ENCODE measurements at regions of chr14 and their contacts with region 1.

Region 1: DNA sequence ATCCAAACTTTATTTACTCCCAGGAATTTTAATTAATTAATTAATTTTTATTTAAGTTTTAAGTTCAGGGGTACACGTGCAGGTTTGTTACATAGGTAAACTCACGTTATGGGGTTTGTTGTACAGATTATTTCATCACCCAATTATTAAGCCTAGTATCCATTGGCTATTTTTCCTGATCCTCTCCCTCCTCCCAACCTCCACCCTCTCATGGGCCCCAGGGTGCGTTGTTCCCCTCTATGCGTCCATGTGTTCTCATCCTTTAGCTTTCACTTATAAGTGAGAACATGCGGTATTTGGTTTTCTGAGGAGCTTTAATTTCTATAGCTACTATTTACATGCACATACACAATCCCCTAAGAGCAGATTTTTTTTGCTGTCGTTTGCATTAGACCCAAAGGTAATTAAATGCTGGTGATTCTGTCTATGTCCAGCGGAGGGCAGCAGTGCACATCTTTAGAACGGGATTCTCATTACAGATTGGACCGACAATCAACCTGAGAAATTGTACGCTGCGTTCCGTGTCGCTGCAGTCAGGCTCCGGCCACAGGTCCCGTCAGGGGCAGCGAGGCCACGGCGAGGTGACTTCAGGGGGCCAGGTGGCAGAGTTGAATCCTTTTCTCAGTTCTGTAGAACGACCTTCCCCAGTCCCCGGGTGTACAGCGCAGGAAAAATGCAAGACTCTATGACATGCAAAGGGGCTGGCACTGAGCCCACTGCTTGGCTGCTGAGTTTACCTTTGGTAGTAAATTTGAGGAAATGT is 11.6 kb downstream of the TMEM30B start:
- DNase-seq: peak; percentile 94
- ATAC-seq: peak; percentile 99
- H3K4me3 Mint-ChIP-seq: peak overlapping the region; percentile 68
- H3K27ac Mint-ChIP-seq: no peak overlapping the region
- H3K4me1 Mint-ChIP-seq: no peaks in the 10 kb centered on the region
- H3K27me3 Mint-ChIP-seq: peaks cover 28% of the 10 kb centered on the region
- CTCF ChIP-seq: peak; percentile 81

Region 2: DNA sequence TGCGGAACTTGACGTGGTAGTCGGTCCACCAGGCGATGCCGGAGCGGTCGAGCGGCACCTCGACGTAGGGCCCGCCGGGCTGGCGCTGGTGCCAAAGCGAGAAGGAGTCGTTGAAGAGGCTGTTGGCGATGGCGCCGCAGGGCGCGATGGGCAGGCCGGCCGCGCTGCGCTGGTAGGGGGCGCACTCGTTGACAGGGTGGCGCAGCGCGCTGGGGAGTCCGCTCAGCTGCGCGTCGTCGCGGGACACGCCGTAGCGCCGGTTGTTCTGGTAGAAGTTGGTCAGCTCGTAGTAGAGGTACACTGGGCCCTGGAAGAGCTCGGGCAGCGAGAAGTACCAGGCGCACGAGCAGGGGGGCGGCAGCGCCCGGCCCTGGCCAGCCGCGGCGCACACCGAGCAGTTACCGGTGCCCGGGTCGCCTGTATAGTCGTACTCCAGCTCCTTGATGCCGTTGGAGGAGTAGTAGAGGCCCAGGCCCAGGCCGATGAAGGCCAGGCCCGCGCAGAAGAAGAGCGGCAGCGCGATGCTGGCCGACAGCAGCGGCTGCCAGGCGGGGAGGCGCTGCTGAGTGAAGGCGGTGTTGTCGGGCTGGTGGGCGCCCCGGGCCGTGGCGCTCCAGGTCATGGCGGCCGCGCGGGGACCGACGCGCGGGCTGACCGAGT is 11.2 kb after region 1 on chr14:
- CTCF ChIA-PET with region 1: interaction called, 61 read pairs
- POLR2A ChIA-PET with region 1: interaction called, 5 read pairs
- intact Hi-C with region 1: no loop called
- DNase-seq: peak; percentile 81
- ATAC-seq: peak; percentile 88
- H3K4me3 Mint-ChIP-seq: peak overlapping the region; percentile 85
- H3K27ac Mint-ChIP-seq: peak overlapping the region; percentile 88
- H3K4me1 Mint-ChIP-seq: peaks cover 30% of the 10 kb centered on the region
- H3K27me3 Mint-ChIP-seq: peaks cover 2% of the 10 kb centered on the region
- CTCF ChIP-seq: peak; percentile 76

Region 3: GRCh38 chr14:61287196-61287595 is 17.7 kb after region 1 on chr14:
- CTCF ChIA-PET with region 1: interaction called, 61 read pairs
- POLR2A ChIA-PET with region 1: no interaction called
- intact Hi-C with region 1: no loop called
- DNase-seq: no peak
- ATAC-seq: no peak
- H3K4me3 Mint-ChIP-seq: no peak overlapping the region
- H3K27ac Mint-ChIP-seq: no peak overlapping the region
- H3K4me1 Mint-ChIP-seq: peaks cover 20% of the 10 kb centered on the region
- H3K27me3 Mint-ChIP-seq: no peaks in the 10 kb centered on the region
- CTCF ChIP-seq: no peak

Region 4: DNA sequence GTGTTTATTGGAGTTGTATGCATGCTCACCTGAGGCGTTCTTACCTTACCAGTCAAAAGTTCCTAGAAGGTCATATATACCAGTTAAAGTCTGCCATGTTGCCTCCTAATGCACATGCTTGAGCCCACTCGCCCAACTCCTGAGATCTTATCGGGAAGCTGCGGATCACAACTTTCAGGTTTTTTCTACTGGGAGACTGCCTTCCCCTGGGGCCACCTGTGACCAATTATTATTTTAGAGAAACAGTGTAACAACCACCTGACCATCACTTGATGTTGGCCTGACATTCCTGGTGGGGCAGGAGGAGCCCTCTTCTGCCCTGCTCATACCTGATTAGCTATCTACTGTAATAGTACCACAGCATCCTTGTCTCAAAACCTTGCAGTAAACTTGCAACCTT is 29.8 kb after region 1 on chr14:
- CTCF ChIA-PET with region 1: no interaction called
- POLR2A ChIA-PET with region 1: no interaction called
- intact Hi-C with region 1: no loop called
- DNase-seq: no peak
- ATAC-seq: no peak
- H3K4me3 Mint-ChIP-seq: no peak overlapping the region
- H3K27ac Mint-ChIP-seq: peak overlapping the region; percentile 76
- H3K4me1 Mint-ChIP-seq: peaks cover 53% of the 10 kb centered on the region
- H3K27me3 Mint-ChIP-seq: no peaks in the 10 kb centered on the region
- CTCF ChIP-seq: no peak

Measured in activated CD8-positive, alpha-beta T cell treated with anti-CD3 and anti-CD28 coated beads for 36 hours (primary cell).